HepG2 (cell line): ENCODE measurements at regions of chr5 and their contacts with region 1.

Region 1: GRCh38 chr5:181207214-181208107 is 2.5 kb upstream of the TRIM7 start:
- DNase-seq: peak; percentile 82
- ATAC-seq: peak; percentile 30
- H3K4me3 ChIP-seq: peak overlapping the region; percentile 54 to 82 (median 61)
- H3K27ac ChIP-seq: peak overlapping the region; percentile 51
- H3K4me1 ChIP-seq: peaks cover 29% of the 10 kb centered on the region
- H3K27me3 ChIP-seq: peaks cover 2 to 35% of the 10 kb centered on the region in 2 experiments; a peak in 4 of 5 replicates
- CTCF ChIP-seq: no peak
- EP300 ChIP-seq: no peak
- POLR2A ChIP-seq: no peak
- RAD21 ChIP-seq: no peak

Region 2: GRCh38 chr5:181181650-181182565 is 25.6 kb before region 1 on chr5:
- CTCF ChIA-PET with region 1: no interaction called
- POLR2A ChIA-PET with region 1: interaction called, 20 read pairs
- in situ Hi-C with region 1: no loop called
- intact Hi-C with region 1: loop called (anchors 1 kb)
- DNase-seq: peak; percentile 74
- ATAC-seq: peak; percentile 79
- H3K4me3 ChIP-seq: peak overlapping the region in 2 of 3 experiments; percentile 25 to 46; a peak in 1 of 6 replicates
- H3K27ac ChIP-seq: no peak overlapping the region
- H3K4me1 ChIP-seq: peaks cover 58% of the 10 kb centered on the region
- H3K27me3 ChIP-seq: no peaks in the 10 kb centered on the region
- CTCF ChIP-seq: peak; percentile 95
- EP300 ChIP-seq: no peak
- POLR2A ChIP-seq: no peak
- RAD21 ChIP-seq: peak; percentile 55

Region 3: GRCh38 chr5:181191529-181192394 is 15.7 kb before region 1 on chr5:
- CTCF ChIA-PET with region 1: no interaction called
- POLR2A ChIA-PET with region 1: interaction called, 104 read pairs
- in situ Hi-C with region 1: no loop called
- intact Hi-C with region 1: loop called (anchors 1 kb)
- DNase-seq: peak; percentile 88
- ATAC-seq: peak; percentile 65
- H3K4me3 ChIP-seq: peak overlapping the region; percentile 80 to 93 (median 81)
- H3K27ac ChIP-seq: peak overlapping the region; percentile 81
- H3K4me1 ChIP-seq: peaks cover 28% of the 10 kb centered on the region
- H3K27me3 ChIP-seq: no peaks in the 10 kb centered on the region; a peak in 1 of 5 replicates
- CTCF ChIP-seq: peak; percentile 53
- EP300 ChIP-seq: 0 out of 4 replicates have a peak, but pooled peaks of 1 of the 2 experiments have one; percentile 10
- POLR2A ChIP-seq: peak in 1 of 2 experiments; percentile 51; a peak in 1 of 4 replicates
- RAD21 ChIP-seq: 0 out of 2 replicates have a peak, but pooled peaks have one; percentile 13

Region 4: DNA sequence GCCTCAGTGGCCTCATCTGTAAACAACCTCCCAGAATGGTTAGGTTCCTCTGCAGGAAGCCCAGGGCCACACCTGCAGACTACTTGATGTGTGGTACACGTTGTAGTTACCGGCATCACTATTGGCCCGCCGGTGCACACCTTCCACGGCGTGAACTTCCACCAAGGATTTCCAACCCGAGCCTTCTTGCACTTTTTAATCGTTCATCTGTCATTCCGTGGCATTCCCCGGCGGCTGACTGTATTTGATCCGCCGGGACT is 10.3 kb after region 1 on chr5:
- CTCF ChIA-PET with region 1: no interaction called
- POLR2A ChIA-PET with region 1: interaction called, 19 read pairs
- in situ Hi-C with region 1: no loop called
- intact Hi-C with region 1: loop called (anchors 1 kb)
- DNase-seq: no peak
- ATAC-seq: peak; percentile 7
- H3K4me3 ChIP-seq: peak overlapping the region; percentile 49 to 78 (median 67)
- H3K27ac ChIP-seq: peak overlapping the region; percentile 21
- H3K4me1 ChIP-seq: peaks cover 35% of the 10 kb centered on the region
- H3K27me3 ChIP-seq: peaks cover 0 to 2% of the 10 kb centered on the region in 2 experiments; a peak in 2 of 5 replicates
- CTCF ChIP-seq: no peak
- EP300 ChIP-seq: no peak
- POLR2A ChIP-seq: no peak
- RAD21 ChIP-seq: no peak